ENCODE measurements at regions of chr6 and their contacts with region 1.

Region 1: GRCh38 chr6:47651505-47651944 is 46.9 kb upstream of the ADGRF4 start:
- DNase-seq: no peak
- ATAC-seq: no peak

Region 2: GRCh38 chr6:47698342-47698787 is 46.8 kb after region 1 on chr6 and contains the start of gene ADGRF4:
- intact Hi-C with region 1: loop called (anchors 5 kb)
- DNase-seq: no peak
- ATAC-seq: no peak
- total RNA-seq, gene ADGRF4: not detected

Region 3: GRCh38 chr6:47733879-47734558 is 82.5 kb after region 1 on chr6:
- intact Hi-C with region 1: loop called (anchors 5 kb)
- DNase-seq: no peak
- ATAC-seq: no peak

Measured in Right ventricle myocardium inferior (tissue), 1 donor.